Activated naive CD8-positive, alpha-beta T cell treated with anti-CD3 and anti-CD28 coated beads, Interleukin-2, amount 10 ng/mL, durations not matched to agents 7 days and 5 days (primary cell): ENCODE measurements at regions of chr19 and their contacts with region 1.

Region 1: GRCh38 chr19:40055832-40056504 is at the start of gene ZNF780B:
- DNase-seq: peak; percentile 79
- ATAC-seq: peak; percentile 92
- H3K4me3 Mint-ChIP-seq: peak within 1 kb of the TSS; percentile 99
- H3K27ac Mint-ChIP-seq: peak within 1 kb of the TSS; percentile 97
- H3K4me1 Mint-ChIP-seq: peaks cover 40% of the 10 kb centered on the region
- H3K27me3 Mint-ChIP-seq: peaks cover 8% of the 10 kb centered on the region
- total RNA-seq, gene ZNF780B: 35.6 to 39.4 TPM

Region 2: DNA sequence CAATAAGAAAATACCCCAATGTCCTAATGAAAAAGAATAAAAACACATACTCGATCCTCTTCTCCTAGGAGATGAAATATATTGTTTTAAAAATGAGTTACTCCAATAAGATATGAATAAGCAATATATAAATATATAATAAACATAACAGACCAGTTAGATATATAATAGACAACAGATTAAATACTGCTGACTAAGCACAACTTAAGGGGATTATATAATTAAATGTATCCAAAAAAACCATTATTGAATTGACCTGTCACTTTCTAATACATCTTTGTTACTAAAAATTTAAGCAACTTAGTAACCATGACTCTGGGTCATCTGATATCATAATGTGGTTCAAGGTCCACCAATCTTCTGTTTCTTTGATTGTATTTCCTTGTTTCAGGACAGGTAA is 14.1 kb after region 1 on chr19:
- POLR2A ChIA-PET with region 1: no interaction called
- DNase-seq: no peak
- ATAC-seq: no peak
- H3K4me3 Mint-ChIP-seq: no peak overlapping the region
- H3K27ac Mint-ChIP-seq: no peak overlapping the region
- H3K4me1 Mint-ChIP-seq: no peaks in the 10 kb centered on the region
- H3K27me3 Mint-ChIP-seq: no peaks in the 10 kb centered on the region

Region 3: DNA sequence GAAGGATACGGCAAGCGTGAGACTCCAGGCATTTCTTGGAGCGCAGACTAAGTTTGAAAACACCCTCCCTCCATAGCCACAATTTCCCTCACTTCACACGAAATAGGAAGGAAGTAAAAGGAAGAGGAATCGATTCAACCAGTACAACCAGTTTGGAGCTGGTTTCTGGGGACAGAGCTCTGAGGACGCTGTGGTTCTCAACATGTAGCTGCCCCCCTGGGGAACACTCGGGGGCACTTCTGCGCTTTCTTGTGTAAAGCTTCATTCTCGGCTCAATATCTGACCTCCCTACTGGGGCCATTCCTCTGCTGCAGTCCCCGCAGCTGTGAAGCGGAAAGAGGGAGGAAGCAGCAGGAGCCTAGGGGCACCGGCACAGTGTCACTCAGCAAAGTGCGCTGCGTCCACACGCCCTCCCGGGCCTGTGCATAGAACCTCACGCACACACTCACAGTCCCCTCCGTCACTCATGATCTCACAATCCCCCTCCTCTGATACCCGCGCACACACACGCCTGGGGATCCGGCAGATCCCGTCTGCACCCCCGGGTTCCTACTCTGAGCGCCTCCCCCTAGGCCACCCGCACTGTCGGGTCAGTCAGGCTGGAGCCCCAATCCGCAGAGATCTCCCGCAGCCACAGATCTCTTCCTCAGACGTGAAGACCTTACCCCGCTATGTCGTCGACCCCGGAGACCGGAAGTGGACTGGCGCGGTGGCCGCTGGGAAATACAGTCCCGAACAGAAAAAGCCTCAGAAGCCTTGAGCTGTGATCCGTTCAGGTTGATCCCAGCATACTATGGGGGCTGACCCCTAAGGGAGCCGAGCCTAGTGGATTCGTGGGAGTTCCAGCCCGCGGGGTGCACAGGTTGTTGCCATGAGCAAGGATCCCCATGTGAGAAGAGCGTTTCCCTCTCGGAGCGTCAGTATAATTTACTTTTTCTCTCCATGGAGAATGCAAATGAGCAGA is 34.6 kb after region 1 on chr19 and contains the start of gene ZNF780A:
- POLR2A ChIA-PET with region 1: interaction called, 11 read pairs
- DNase-seq: peak; percentile 82
- ATAC-seq: peak; percentile 90
- H3K4me3 Mint-ChIP-seq: peak within 1 kb of the TSS; percentile 99
- H3K27ac Mint-ChIP-seq: peak within 1 kb of the TSS; percentile 100
- H3K4me1 Mint-ChIP-seq: peaks cover 25% of the 10 kb centered on the region
- H3K27me3 Mint-ChIP-seq: peaks cover 13% of the 10 kb centered on the region
- total RNA-seq, gene ZNF780A: 30.2 to 32.2 TPM

Region 4: DNA sequence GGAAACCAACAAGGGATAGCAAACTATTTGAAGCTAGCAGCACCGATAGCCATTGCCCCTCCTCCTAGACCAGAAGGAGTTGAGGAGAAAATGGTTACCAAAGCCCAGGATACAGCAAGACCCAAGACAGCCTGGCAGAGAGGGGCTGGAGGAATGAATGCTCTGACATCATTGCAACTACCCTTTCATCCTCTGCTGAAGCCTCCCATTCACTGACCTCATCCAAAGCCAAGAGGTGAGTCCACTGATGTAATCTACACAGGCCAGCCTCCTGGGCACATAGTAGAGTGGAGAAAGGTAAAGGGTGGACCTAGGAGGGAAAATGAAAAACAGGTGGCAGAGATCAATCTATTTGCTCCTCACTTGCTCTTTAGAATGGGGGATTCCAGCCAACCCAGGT is 77.5 kb after region 1 on chr19:
- POLR2A ChIA-PET with region 1: no interaction called
- DNase-seq: no peak
- ATAC-seq: no peak
- H3K4me3 Mint-ChIP-seq: no peak overlapping the region
- H3K27ac Mint-ChIP-seq: no peak overlapping the region
- H3K4me1 Mint-ChIP-seq: no peaks in the 10 kb centered on the region
- H3K27me3 Mint-ChIP-seq: peaks cover 48% of the 10 kb centered on the region